ENCODE measurements at regions of chr13 and their contacts with region 1.

Region 1: GRCh38 chr13:48233046-48233907 is at the start of gene ITM2B:
- DNase-seq: peak; percentile 70
- H3K4me3 Mint-ChIP-seq: peak within 1 kb of the TSS; percentile 87
- H3K27ac Mint-ChIP-seq: peak within 1 kb of the TSS; percentile 94
- H3K4me1 Mint-ChIP-seq: peaks cover 60% of the 10 kb centered on the region
- H3K27me3 Mint-ChIP-seq: no peaks in the 10 kb centered on the region
- total RNA-seq, gene ITM2B: 110 to 112 TPM

Region 2: GRCh38 chr13:46796515-46797474 is 1436.5 kb before region 1 on chr13 and contains the start of gene ESD:
- CTCF ChIA-PET with region 1: no interaction called
- intact Hi-C with region 1: loop called (anchors 10 kb)
- DNase-seq: peak; percentile 98
- H3K4me3 Mint-ChIP-seq: peak within 1 kb of the TSS; percentile 93
- H3K27ac Mint-ChIP-seq: peak within 1 kb of the TSS; percentile 95
- H3K4me1 Mint-ChIP-seq: peaks cover 32% of the 10 kb centered on the region
- H3K27me3 Mint-ChIP-seq: no peaks in the 10 kb centered on the region
- total RNA-seq, gene ESD: 150 to 153 TPM

Region 3: DNA sequence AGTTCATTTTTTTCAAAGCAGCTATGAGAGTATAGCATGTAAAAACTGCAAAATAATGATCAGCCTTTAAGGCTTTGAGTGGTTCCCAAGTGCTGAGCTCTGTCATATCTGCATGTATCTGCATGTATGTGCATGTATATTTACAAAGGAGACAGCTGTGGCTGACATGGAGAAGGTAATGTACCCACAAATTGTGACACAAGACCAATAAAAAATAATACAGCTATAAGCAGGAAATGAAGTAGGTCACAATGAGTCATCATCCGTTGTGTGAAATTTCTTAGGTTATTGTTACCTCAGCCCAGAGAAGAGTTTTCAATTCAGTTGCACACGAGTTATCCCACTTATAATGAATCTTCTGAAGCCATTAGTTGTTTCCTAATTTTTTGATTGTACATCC is 77.4 kb before region 1 on chr13:
- CTCF ChIA-PET with region 1: interaction called, 6 read pairs
- intact Hi-C with region 1: loop called (anchors 1 kb)
- DNase-seq: peak; percentile 44
- H3K4me3 Mint-ChIP-seq: peak overlapping the region; percentile 74
- H3K27ac Mint-ChIP-seq: peak overlapping the region; percentile 99
- H3K4me1 Mint-ChIP-seq: peaks cover 85% of the 10 kb centered on the region
- H3K27me3 Mint-ChIP-seq: no peaks in the 10 kb centered on the region

Region 4: GRCh38 chr13:48210178-48210577 is 23.1 kb before region 1 on chr13:
- CTCF ChIA-PET with region 1: no interaction called
- intact Hi-C with region 1: loop called (anchors 1 kb)
- DNase-seq: no peak
- H3K4me3 Mint-ChIP-seq: no peak overlapping the region
- H3K27ac Mint-ChIP-seq: no peak overlapping the region
- H3K4me1 Mint-ChIP-seq: peaks cover 26% of the 10 kb centered on the region
- H3K27me3 Mint-ChIP-seq: no peaks in the 10 kb centered on the region

Region 5: DNA sequence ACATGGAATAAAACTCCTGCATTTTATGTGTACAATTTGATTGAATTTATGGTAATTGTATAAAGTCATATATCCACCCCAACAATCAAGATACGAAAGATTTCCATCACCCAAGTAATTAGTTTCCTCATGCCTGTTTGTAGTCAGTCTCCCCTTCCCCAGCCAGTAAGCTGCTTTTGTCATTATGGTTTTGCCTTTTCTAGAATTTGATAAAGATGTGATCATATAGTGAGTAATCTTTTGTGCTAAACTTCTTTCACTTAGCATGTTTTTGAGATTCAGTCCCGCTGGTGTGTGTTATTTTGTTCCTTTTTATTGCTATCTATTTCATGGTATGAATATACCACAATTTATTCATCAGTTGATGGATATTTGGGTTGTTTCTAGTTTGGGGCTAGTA is 15.7 kb after region 1 on chr13:
- CTCF ChIA-PET with region 1: interaction called, 3 read pairs
- intact Hi-C with region 1: loop called (anchors 1 kb)
- DNase-seq: no peak
- H3K4me3 Mint-ChIP-seq: peak overlapping the region; percentile 16
- H3K27ac Mint-ChIP-seq: peak overlapping the region; percentile 81
- H3K4me1 Mint-ChIP-seq: peaks cover 72% of the 10 kb centered on the region
- H3K27me3 Mint-ChIP-seq: no peaks in the 10 kb centered on the region

Region 6: DNA sequence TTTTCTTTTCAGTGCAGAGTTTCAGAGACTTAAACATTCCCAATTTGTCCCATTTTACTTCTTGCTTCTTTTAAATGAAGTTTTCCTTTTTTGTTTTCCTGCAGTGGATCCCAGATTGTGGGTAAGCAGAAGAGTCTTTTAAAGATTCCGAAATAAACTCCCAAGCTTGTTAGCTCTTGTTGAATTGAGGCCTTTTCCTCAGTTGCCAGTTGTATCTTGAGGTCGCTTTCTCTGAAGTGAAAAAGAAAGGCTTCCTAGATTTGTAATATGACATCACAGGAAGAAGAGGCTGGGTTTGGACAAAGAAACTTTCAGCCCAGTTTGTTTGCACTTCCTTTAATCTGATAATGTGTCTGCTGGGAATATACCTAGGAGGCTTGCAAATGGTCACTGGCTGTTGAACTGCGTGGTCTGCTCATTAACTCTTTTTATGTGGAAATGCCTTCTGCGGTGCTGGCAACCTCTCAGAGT is 179.6 kb after region 1 on chr13 and contains the start of gene LPAR6:
- CTCF ChIA-PET with region 1: no interaction called
- intact Hi-C with region 1: loop called (anchors 2 kb)
- DNase-seq: peak; percentile 20
- H3K4me3 Mint-ChIP-seq: peak within 1 kb of the TSS; percentile 84
- H3K27ac Mint-ChIP-seq: peak within 1 kb of the TSS; percentile 92
- H3K4me1 Mint-ChIP-seq: peaks cover 33% of the 10 kb centered on the region
- H3K27me3 Mint-ChIP-seq: no peaks in the 10 kb centered on the region
- total RNA-seq, gene LPAR6: 6.1 to 6.6 TPM

Region 7: GRCh38 chr13:48562296-48563066 is 329.2 kb after region 1 on chr13:
- CTCF ChIA-PET with region 1: no interaction called
- intact Hi-C with region 1: loop called (anchors 1 kb)
- DNase-seq: peak; percentile 76
- H3K4me3 Mint-ChIP-seq: no peak overlapping the region
- H3K27ac Mint-ChIP-seq: no peak overlapping the region
- H3K4me1 Mint-ChIP-seq: peaks cover 23% of the 10 kb centered on the region
- H3K27me3 Mint-ChIP-seq: peaks cover 47% of the 10 kb centered on the region

Measured in activated naive CD4-positive, alpha-beta T cell treated with anti-CD3 and anti-CD28 coated beads for 36 hours (primary cell).